ENCODE measurements at regions of chr14 and their contacts with region 1.

Region 1: GRCh38 chr14:57317316-57317715 is 48.5 kb downstream of the AP5M1 start:
- DNase-seq: peak; percentile 90
- H3K4me3 Mint-ChIP-seq: no peak overlapping the region
- H3K27ac Mint-ChIP-seq: no peak overlapping the region
- H3K4me1 Mint-ChIP-seq: no peaks in the 10 kb centered on the region
- H3K27me3 Mint-ChIP-seq: no peaks in the 10 kb centered on the region
- CTCF ChIP-seq: peak; percentile 91

Region 2: GRCh38 chr14:57182760-57183503 is 134.4 kb before region 1 on chr14:
- CTCF ChIA-PET with region 1: no interaction called
- POLR2A ChIA-PET with region 1: no interaction called
- intact Hi-C with region 1: loop called (anchors 10 kb)
- DNase-seq: peak; percentile 45
- H3K4me3 Mint-ChIP-seq: no peak overlapping the region
- H3K27ac Mint-ChIP-seq: no peak overlapping the region
- H3K4me1 Mint-ChIP-seq: no peaks in the 10 kb centered on the region
- H3K27me3 Mint-ChIP-seq: peaks cover 66% of the 10 kb centered on the region
- CTCF ChIP-seq: peak; percentile 44

Region 3: DNA sequence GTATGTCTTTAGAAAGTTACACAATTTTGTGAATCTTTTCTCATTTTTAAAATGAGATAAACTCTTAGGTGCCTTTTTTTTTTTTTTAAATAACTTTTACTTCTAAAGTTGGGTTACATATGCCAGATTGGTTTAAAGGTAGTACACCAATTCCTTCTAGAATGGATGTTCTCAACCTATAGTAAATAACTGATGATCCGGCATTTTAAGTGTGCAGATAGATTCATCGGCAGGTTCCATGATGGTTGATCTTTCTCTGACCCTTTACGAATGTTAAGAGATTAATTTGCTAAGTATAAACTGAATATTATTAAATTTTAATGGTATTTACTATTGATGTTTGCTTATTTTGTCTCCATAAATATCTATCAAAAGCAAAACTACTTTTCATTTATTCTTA is 40.3 kb before region 1 on chr14:
- CTCF ChIA-PET with region 1: no interaction called
- POLR2A ChIA-PET with region 1: no interaction called
- intact Hi-C with region 1: no loop called
- DNase-seq: no peak
- H3K4me3 Mint-ChIP-seq: no peak overlapping the region
- H3K27ac Mint-ChIP-seq: no peak overlapping the region
- H3K4me1 Mint-ChIP-seq: no peaks in the 10 kb centered on the region
- H3K27me3 Mint-ChIP-seq: no peaks in the 10 kb centered on the region
- CTCF ChIP-seq: no peak

Region 4: GRCh38 chr14:57352396-57353170 is 35.3 kb after region 1 on chr14:
- CTCF ChIA-PET with region 1: interaction called, 3 read pairs
- POLR2A ChIA-PET with region 1: interaction called, 3 read pairs
- intact Hi-C with region 1: loop called (anchors 2 kb)
- DNase-seq: peak; percentile 11
- H3K4me3 Mint-ChIP-seq: peak overlapping the region; percentile 13
- H3K27ac Mint-ChIP-seq: peak overlapping the region; percentile 24
- H3K4me1 Mint-ChIP-seq: peaks cover 18% of the 10 kb centered on the region
- H3K27me3 Mint-ChIP-seq: no peaks in the 10 kb centered on the region
- CTCF ChIP-seq: no peak

Region 5: DNA sequence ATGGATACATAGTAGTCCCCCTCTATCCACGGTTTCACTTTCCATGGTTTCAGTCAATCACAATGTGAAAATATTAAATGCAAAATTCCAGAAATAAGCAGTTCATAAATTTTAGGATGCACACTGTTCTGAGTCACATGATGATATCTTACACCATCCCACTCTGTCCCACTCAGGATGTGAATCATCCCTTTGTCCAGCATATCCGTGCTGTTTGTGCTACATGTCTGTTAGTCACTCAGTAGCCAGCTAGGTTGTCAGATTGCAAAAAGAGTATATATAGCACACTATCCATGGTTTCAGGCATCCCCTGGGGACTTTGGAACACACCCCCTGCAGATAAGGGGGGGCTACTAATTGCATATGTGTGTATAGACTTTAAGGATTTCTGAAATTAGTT is 65.0 kb after region 1 on chr14:
- CTCF ChIA-PET with region 1: no interaction called
- POLR2A ChIA-PET with region 1: no interaction called
- intact Hi-C with region 1: loop called (anchors 2 kb)
- DNase-seq: peak; percentile 82
- H3K4me3 Mint-ChIP-seq: no peak overlapping the region
- H3K27ac Mint-ChIP-seq: no peak overlapping the region
- H3K4me1 Mint-ChIP-seq: peaks cover 17% of the 10 kb centered on the region
- H3K27me3 Mint-ChIP-seq: no peaks in the 10 kb centered on the region
- CTCF ChIP-seq: no peak